ENCODE measurements at regions of chr6 and their contacts with region 1.

Region 1: DNA sequence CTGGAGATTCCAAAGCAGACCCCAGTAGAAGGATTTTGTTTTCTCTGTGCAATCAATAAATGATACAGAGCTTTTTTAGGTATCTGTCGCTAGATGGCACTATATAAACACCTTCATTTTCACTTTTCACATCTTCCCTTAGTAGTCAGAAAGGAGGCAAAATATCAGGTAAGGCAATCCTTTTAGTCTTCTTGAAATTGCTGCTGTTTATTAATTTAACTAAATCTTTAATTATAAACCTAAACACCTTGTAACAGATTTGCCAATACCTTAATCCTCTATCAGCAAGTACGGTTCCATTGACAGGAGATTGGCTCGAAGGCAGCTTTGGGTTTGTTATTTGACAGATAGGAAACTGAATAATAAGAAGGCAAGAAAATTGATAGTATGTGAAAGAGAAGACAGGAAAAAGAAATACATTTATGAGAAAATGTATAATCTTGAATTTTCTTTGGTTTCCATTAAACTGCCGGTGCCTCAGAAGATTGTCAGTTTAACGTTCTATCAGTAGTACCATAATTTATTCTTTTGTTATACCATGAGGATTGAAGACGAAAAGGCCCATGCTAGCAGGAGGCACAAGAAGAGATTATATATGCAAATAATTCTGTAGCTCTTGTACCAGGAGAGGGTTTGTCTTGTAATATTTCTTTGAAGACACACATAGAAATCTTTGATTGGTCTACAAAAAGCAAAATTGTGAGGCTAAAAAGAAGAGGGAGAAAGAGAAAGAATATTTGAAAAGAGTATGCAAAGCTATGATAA is 23.5 kb upstream of the IBTK start:
- DNase-seq: no peak
- H3K4me3 ChIP-seq: no peak overlapping the region
- CTCF ChIP-seq: peak; percentile 39

Region 2: GRCh38 chr6:82247634-82248232 is 23.3 kb before region 1 on chr6 and contains the start of gene IBTK:
- CTCF ChIA-PET with region 1: interaction called, 27 read pairs
- POLR2A ChIA-PET with region 1: no interaction called
- DNase-seq: no peak
- H3K4me3 ChIP-seq: peak within 1 kb of the TSS; percentile 77
- CTCF ChIP-seq: no peak

Region 3: DNA sequence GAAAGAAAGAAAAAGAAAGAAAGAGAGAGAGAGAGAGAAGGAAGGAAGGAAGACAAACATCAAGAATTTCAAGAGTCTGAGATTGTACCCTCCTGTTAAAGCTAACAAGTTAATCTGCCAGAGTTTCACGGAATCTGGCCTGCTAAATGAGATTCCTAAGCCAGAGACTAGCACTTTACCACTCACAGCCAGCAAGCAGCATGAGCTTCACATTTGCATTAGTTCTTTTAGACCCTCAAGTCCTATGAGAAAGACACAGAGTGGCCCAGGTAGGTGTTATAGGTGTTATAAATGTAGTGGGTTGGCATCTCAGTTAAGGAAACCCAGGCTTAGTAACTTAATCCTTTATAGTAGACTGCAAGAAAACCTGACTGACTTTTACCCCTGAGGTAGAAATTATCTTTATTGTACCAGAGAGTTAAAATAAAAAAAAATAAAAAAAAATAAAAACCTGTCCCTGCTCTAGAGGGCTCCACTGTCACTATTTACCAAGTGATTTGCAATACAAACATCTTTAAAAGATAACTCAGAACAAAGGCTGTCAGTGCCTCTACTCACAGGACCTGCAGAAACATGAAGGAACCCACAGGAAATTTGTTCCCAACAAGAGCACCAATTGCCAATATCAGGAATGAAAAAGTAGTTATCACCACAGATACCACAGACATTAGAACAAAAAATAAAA is 13.8 kb before region 1 on chr6:
- CTCF ChIA-PET with region 1: interaction called, 68 read pairs
- POLR2A ChIA-PET with region 1: no interaction called
- DNase-seq: no peak
- H3K4me3 ChIP-seq: no peak overlapping the region
- CTCF ChIP-seq: no peak

Region 4: GRCh38 chr6:82283771-82284410 is 12.8 kb after region 1 on chr6:
- CTCF ChIA-PET with region 1: interaction called, 15 read pairs
- POLR2A ChIA-PET with region 1: no interaction called
- DNase-seq: no peak
- H3K4me3 ChIP-seq: no peak overlapping the region
- CTCF ChIP-seq: no peak

Region 5: GRCh38 chr6:83057705-83058321 is 786.8 kb after region 1 on chr6:
- CTCF ChIA-PET with region 1: interaction called, 195 read pairs
- POLR2A ChIA-PET with region 1: no interaction called
- DNase-seq: no peak
- H3K4me3 ChIP-seq: no peak overlapping the region
- CTCF ChIP-seq: peak; percentile 80

Measured in AG04449 (cell line).